ENCODE measurements at regions of chr17 and their contacts with region 1.

Region 1: DNA sequence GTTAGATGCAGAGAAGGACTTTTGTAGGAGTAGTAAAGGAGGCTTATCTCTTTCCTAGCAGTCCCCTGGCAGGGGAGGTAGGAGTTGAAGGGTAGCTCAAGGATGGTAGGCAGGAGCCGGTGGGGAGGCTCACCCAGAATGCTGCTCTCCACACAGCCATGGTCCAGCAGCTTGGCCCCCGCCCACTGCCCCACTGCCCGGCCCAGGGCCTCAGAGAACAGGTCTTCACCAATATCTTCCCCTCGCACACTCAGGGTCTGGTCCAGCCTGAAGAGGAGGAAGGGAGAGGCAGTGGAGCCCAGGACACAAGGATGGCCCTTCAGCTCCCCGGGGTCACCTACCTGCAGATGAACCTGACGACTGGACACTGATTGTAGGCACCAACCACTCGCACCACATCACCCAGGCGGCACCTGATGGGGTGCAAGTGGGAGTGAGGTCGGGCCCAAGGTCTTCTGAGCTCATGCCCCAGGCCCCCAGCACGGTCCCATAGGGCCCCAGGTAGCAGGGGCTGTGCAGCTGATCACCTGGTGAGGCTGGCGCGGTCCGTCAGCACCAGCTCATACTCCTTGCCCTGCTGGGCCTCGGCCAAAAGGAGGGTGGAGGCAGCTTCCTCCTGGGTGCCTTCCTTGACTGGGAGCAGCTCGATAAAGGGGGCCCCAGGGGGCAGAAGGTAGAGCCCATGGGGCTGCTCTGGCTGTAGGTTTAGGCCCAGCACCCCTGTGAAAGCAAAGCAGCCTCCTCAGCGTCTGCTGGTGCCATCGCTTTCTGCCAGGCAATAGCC is 3.6 kb downstream of the GHDC start:
- DNase-seq: peak in 1 of 6 donors; percentile 49
- ATAC-seq: no peak
- H3K4me3 ChIP-seq: no peak overlapping the region
- H3K27ac ChIP-seq: no peak overlapping the region
- H3K4me1 ChIP-seq: peaks cover 0 to 6% (median 5%) of the 10 kb centered on the region in 3 donors
- H3K27me3 ChIP-seq: no peaks in the 10 kb centered on the region
- CTCF ChIP-seq: no peak

Region 2: GRCh38 chr17:42233941-42234340 is 43.3 kb after region 1 on chr17:
- intact Hi-C with region 1: loop called in 1 of 3 experiments (anchors 2 kb)
- DNase-seq: no peak
- ATAC-seq: no peak
- H3K4me3 ChIP-seq: no peak overlapping the region
- H3K27ac ChIP-seq: no peak overlapping the region
- H3K4me1 ChIP-seq: no peaks in the 10 kb centered on the region
- H3K27me3 ChIP-seq: no peaks in the 10 kb centered on the region
- CTCF ChIP-seq: no peak

Region 3: GRCh38 chr17:42388381-42389134 is 197.9 kb after region 1 on chr17 and contains the start of gene STAT3:
- intact Hi-C with region 1: no loop called
- DNase-seq: peak; percentile 100
- ATAC-seq: peak; percentile 89 to 93 (median 90)
- H3K4me3 ChIP-seq: peak within 1 kb of the TSS; percentile 62 to 98 (median 89)
- H3K27ac ChIP-seq: peak within 1 kb of the TSS; percentile 96 to 100 (median 99)
- H3K4me1 ChIP-seq: peaks cover 5 to 33% (median 27%) of the 10 kb centered on the region in 3 donors
- H3K27me3 ChIP-seq: no peaks in the 10 kb centered on the region
- CTCF ChIP-seq: no peak
- total RNA-seq, gene STAT3: 63.3 to 127 (median 78.6) TPM